Tibial artery (tissue), 4 donors: ENCODE measurements at regions of chr7 and their contacts with region 1.

Region 1: GRCh38 chr7:5665094-5666025 is 116.1 kb downstream of the RNF216 start:
- DNase-seq: peak; percentile 78 to 82
- H3K4me3 ChIP-seq: no peak overlapping the region
- H3K27ac ChIP-seq: peak overlapping the region in 1 of 2 donors; percentile 32
- H3K4me1 ChIP-seq: peaks cover 0 to 18% (median 0%) of the 10 kb centered on the region in 4 donors
- H3K27me3 ChIP-seq: no peaks in the 10 kb centered on the region
- CTCF ChIP-seq: peak; percentile 84 to 94

Region 2: DNA sequence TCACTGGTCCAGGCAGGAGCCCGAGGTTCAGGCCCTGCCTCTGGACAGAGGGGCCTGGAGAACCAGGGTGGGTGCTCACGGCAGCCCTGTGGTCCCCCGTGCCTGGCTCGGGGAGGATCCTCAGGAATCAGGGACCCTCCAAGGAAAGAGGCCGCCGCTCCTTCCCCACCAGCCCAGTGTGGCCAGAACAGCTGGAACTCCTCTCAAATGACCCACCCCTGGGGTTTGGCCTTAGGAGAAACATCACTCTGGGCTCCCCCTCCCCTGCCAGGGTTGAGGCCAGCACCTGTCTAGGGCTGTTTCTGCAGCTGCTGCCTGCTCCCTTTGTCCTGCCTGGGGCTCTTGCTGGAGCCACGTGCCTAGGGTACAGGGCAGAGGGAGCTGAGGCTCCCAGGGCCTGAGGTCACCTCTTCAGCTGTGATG is 44.9 kb before region 1 on chr7:
- intact Hi-C with region 1: loop called (anchors 5 kb)
- DNase-seq: no peak
- H3K4me3 ChIP-seq: no peak overlapping the region
- H3K27ac ChIP-seq: no peak overlapping the region
- H3K4me1 ChIP-seq: no peaks in the 10 kb centered on the region
- H3K27me3 ChIP-seq: no peaks in the 10 kb centered on the region
- CTCF ChIP-seq: no peak